T-cell (primary cell): ENCODE measurements at regions of chr4 and their contacts with region 1.

Region 1: DNA sequence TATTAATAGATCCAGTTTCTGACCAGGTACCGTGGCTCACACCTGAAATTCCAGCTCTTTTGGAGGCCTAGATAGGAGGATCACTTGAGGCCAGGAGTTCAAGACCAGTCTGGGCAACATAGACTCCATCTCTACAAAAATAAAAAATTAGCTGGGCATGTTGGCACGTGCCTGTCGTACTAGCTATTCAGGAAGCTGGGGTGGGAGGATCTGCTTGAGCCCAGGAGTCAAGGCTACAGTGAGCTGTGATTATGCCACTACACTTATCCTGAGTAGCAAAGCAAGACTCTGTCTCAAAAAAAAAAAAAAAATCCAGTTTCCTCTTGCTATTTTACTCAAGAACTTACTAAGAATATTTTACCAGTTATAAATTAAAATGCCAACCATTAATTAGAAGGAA is 91.7 kb downstream of the SLC10A6 start:
- DNase-seq: no peak
- ATAC-seq: no peak
- H3K4me3 ChIP-seq: no peak overlapping the region
- H3K4me3 Mint-ChIP-seq: no peak overlapping the region
- H3K27ac ChIP-seq: no peak overlapping the region
- H3K27ac Mint-ChIP-seq: no peak overlapping the region
- H3K4me1 ChIP-seq: no peaks in the 10 kb centered on the region
- H3K4me1 Mint-ChIP-seq: no peaks in the 10 kb centered on the region
- H3K27me3 ChIP-seq: no peaks in the 10 kb centered on the region
- H3K27me3 Mint-ChIP-seq: no peaks in the 10 kb centered on the region

Region 2: DNA sequence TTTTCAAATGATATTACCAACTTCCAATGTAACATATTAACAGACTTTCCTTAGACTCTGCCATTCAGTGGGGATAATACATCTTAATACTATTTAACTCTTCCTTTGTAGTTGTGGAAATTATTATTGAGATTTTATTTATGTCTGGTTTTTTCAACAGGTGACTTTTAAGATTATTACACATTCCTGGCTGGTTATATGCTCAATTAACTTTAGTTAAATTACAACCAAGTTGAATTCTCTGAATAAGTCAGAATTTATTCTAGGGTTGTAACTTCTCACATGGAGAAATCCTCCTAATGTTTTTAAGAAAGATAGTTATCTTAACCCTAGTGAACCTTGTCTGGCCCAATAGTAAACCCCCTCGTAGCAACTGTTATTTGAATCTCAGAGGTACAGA is 15.6 kb before region 1 on chr4:
- CTCF ChIA-PET with region 1: no interaction called
- POLR2A ChIA-PET with region 1: no interaction called
- DNase-seq: no peak
- ATAC-seq: no peak
- H3K4me3 ChIP-seq: no peak overlapping the region
- H3K4me3 Mint-ChIP-seq: no peak overlapping the region
- H3K27ac ChIP-seq: no peak overlapping the region
- H3K27ac Mint-ChIP-seq: no peak overlapping the region
- H3K4me1 ChIP-seq: no peaks in the 10 kb centered on the region
- H3K4me1 Mint-ChIP-seq: no peaks in the 10 kb centered on the region
- H3K27me3 ChIP-seq: no peaks in the 10 kb centered on the region
- H3K27me3 Mint-ChIP-seq: peaks cover 0 to 5% of the 10 kb centered on the region in 2 donors

Region 3: DNA sequence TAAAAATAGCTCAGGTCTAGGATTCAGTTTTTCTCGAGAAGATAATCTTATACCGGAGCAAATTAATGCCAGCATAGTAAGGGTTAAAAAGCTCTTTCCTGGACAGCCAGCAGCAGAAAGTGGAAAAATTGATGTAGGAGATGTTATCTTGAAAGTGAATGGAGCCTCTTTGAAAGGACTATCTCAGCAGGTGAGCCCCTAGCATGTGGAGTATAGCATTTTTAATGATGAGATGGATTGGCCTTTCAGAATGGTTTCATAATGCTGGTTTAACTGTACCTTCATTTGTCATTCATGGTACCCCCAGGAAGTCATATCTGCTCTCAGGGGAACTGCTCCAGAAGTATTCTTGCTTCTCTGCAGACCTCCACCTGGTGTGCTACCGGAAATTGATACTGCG is 12.3 kb after region 1 on chr4:
- CTCF ChIA-PET with region 1: no interaction called
- POLR2A ChIA-PET with region 1: interaction called in 1 of 2 experiments, 11 read pairs
- DNase-seq: no peak
- ATAC-seq: no peak
- H3K4me3 ChIP-seq: no peak overlapping the region
- H3K4me3 Mint-ChIP-seq: no peak overlapping the region
- H3K27ac ChIP-seq: no peak overlapping the region
- H3K27ac Mint-ChIP-seq: no peak overlapping the region
- H3K4me1 ChIP-seq: no peaks in the 10 kb centered on the region
- H3K4me1 Mint-ChIP-seq: no peaks in the 10 kb centered on the region
- H3K27me3 ChIP-seq: no peaks in the 10 kb centered on the region
- H3K27me3 Mint-ChIP-seq: peaks cover 0 to 5% of the 10 kb centered on the region in 2 donors

Region 4: GRCh38 chr4:86895692-86896488 is 138.4 kb after region 1 on chr4:
- CTCF ChIA-PET with region 1: no interaction called
- POLR2A ChIA-PET with region 1: no interaction called
- DNase-seq: peak in 4 of 35 experiments; percentile 4 to 66 (median 12)
- ATAC-seq: peak in 2 of 4 experiments; percentile 48 to 60
- H3K4me3 ChIP-seq: no peak overlapping the region
- H3K4me3 Mint-ChIP-seq: no peak overlapping the region
- H3K27ac ChIP-seq: no peak overlapping the region
- H3K27ac Mint-ChIP-seq: no peak overlapping the region
- H3K4me1 ChIP-seq: peaks cover 0 to 10% of the 10 kb centered on the region in 2 experiments
- H3K4me1 Mint-ChIP-seq: peaks cover 6 to 10% (median 7%) of the 10 kb centered on the region in 3 donors
- H3K27me3 ChIP-seq: peaks cover 0 to 18% of the 10 kb centered on the region in 2 experiments
- H3K27me3 Mint-ChIP-seq: peaks cover 15 to 17% of the 10 kb centered on the region in 2 donors